ENCODE measurements at regions of chr11 and their contacts with region 1.

Region 1: GRCh38 chr11:9158898-9159391 is 67.5 kb upstream of the SCUBE2 start:
- DNase-seq: no peak
- H3K4me3 ChIP-seq: no peak overlapping the region
- H3K27ac ChIP-seq: no peak overlapping the region
- H3K4me1 ChIP-seq: no peaks in the 10 kb centered on the region
- H3K27me3 ChIP-seq: no peaks in the 10 kb centered on the region
- CTCF ChIP-seq: no peak
- EP300 ChIP-seq: no peak
- POLR2A ChIP-seq: no peak

Region 2: GRCh38 chr11:9506489-9507276 is 347.7 kb after region 1 on chr11:
- in situ Hi-C with region 1: loop called in 1 of 4 experiments (anchors 25 kb)
- intact Hi-C with region 1: no loop called
- DNase-seq: peak; percentile 82
- H3K4me3 ChIP-seq: no peak overlapping the region
- H3K27ac ChIP-seq: no peak overlapping the region
- H3K4me1 ChIP-seq: peaks cover 0 to 9% (median 6%) of the 10 kb centered on the region in 4 donors
- H3K27me3 ChIP-seq: no peaks in the 10 kb centered on the region
- CTCF ChIP-seq: peak; percentile 83 to 97 (median 92)
- EP300 ChIP-seq: no peak
- POLR2A ChIP-seq: no peak

Measured in transverse colon (tissue), 4 donors.